IMR-90 (cell line): ENCODE measurements at regions of chr13 and their contacts with region 1.

Region 1: GRCh38 chr13:21476893-21477472 is 17.9 kb upstream of the ZDHHC20 start:
- DNase-seq: peak; percentile 74
- ATAC-seq: peak; percentile 85
- H3K4me3 ChIP-seq: peak overlapping the region; percentile 27
- H3K27ac ChIP-seq: no peak overlapping the region
- H3K4me1 ChIP-seq: no peaks in the 10 kb centered on the region
- H3K27me3 ChIP-seq: no peaks in the 10 kb centered on the region
- CTCF ChIP-seq: peak; percentile 83
- POLR2A ChIP-seq: no peak
- RAD21 ChIP-seq: peak; percentile 75

Region 2: DNA sequence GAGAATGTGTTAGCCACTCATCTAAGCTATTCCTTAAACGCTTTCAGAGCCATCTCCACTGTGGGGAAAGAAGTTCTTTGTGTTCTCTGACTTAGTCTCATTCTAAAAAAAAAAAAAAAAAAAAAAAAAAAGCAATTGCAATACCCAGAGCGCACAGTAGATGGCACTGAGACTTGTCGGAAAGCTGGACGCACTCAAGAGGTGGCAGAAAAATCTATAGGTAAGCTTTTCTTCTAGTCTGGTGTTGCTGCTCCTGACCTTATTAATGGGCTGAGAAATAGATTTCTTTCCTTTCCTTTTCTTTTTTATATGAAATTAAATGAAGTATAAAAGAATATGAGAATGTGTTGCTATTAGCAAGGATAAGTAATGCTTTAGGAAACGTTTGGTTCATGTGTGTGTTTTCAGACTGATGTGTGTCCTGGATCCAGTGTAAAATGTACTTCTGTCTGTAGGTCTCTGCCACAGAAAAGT is 1279.6 kb before region 1 on chr13:
- CTCF ChIA-PET with region 1: no interaction called
- POLR2A ChIA-PET with region 1: no interaction called
- dilution Hi-C with region 1: no loop called
- in situ Hi-C with region 1: loop called (anchors 25 kb)
- intact Hi-C with region 1: loop called (anchors 2 kb)
- DNase-seq: peak; percentile 56
- ATAC-seq: peak; percentile 73
- H3K4me3 ChIP-seq: no peak overlapping the region
- H3K27ac ChIP-seq: no peak overlapping the region
- H3K4me1 ChIP-seq: peaks cover 2% of the 10 kb centered on the region; the same call in 1 of the 2 replicates
- H3K27me3 ChIP-seq: peaks cover 65% of the 10 kb centered on the region
- CTCF ChIP-seq: peak; percentile 80
- POLR2A ChIP-seq: no peak
- RAD21 ChIP-seq: peak; percentile 76

Region 3: DNA sequence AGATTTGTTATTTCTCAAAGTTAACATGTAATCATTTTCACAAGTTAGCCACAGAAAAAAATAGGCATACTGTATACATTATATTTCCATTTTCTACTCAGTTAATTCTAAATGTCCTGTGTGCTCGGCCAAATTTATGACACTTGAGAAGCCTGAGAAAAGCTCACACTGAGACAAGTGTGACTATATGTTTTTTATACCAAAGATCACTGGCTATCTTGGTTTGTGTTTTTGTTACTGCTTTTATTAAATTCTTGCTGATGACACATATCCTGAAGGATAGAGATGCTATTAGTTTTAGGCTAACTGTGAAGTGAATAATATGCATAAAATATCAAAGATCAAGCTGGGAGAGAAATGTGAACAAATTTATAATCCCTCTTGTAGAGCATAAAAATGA is 822.8 kb before region 1 on chr13:
- CTCF ChIA-PET with region 1: no interaction called
- POLR2A ChIA-PET with region 1: no interaction called
- dilution Hi-C with region 1: no loop called
- in situ Hi-C with region 1: no loop called
- intact Hi-C with region 1: no loop called
- DNase-seq: peak; percentile 53
- ATAC-seq: peak; percentile 62
- H3K4me3 ChIP-seq: no peak overlapping the region
- H3K27ac ChIP-seq: no peak overlapping the region
- H3K4me1 ChIP-seq: no peaks in the 10 kb centered on the region
- H3K27me3 ChIP-seq: no peaks in the 10 kb centered on the region
- CTCF ChIP-seq: no peak
- POLR2A ChIP-seq: no peak
- RAD21 ChIP-seq: no peak

Region 4: GRCh38 chr13:20713751-20714150 is 763.2 kb before region 1 on chr13:
- CTCF ChIA-PET with region 1: no interaction called
- POLR2A ChIA-PET with region 1: no interaction called
- dilution Hi-C with region 1: no loop called
- in situ Hi-C with region 1: no loop called
- intact Hi-C with region 1: loop called (anchors 5 kb)
- DNase-seq: peak; percentile 39
- ATAC-seq: no peak
- H3K4me3 ChIP-seq: no peak overlapping the region
- H3K27ac ChIP-seq: no peak overlapping the region
- H3K4me1 ChIP-seq: peaks cover 9% of the 10 kb centered on the region
- H3K27me3 ChIP-seq: peaks cover 1% of the 10 kb centered on the region; the same call in 1 of the 2 replicates
- CTCF ChIP-seq: no peak
- POLR2A ChIP-seq: no peak
- RAD21 ChIP-seq: no peak

Region 5: DNA sequence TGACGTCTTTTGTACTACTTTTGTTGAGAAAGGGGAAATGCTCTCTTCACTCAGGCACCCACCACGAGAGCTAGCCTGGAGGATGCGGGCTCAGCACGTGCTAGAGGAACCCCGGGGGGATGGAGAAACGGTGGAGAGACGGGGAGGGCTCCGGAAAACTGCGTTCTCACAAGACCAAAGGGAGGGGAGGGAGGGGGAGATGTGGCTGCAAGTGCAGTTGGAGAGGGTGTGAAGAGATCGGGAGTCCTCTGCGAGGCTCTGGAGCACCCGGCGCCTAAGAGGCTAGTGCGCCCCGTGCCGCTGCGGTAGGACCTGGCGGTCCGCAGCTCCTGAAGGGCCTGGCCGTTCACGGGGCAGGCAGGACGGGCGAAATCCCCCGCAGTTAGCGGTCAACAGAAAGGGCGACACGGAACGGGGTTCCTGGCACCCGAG is 531.0 kb before region 1 on chr13:
- CTCF ChIA-PET with region 1: no interaction called
- POLR2A ChIA-PET with region 1: no interaction called
- dilution Hi-C with region 1: no loop called
- in situ Hi-C with region 1: loop called (anchors 10 kb)
- intact Hi-C with region 1: loop called (anchors 2 kb)
- DNase-seq: no peak
- ATAC-seq: no peak
- H3K4me3 ChIP-seq: no peak overlapping the region
- H3K27ac ChIP-seq: no peak overlapping the region
- H3K4me1 ChIP-seq: peaks cover 3% of the 10 kb centered on the region; the same call in 1 of the 2 replicates
- H3K27me3 ChIP-seq: no peaks in the 10 kb centered on the region; the same call in 1 of the 2 replicates
- CTCF ChIP-seq: no peak
- POLR2A ChIP-seq: no peak
- RAD21 ChIP-seq: no peak

Region 6: GRCh38 chr13:21181671-21182070 is 295.3 kb before region 1 on chr13:
- CTCF ChIA-PET with region 1: interaction called, 3 read pairs
- POLR2A ChIA-PET with region 1: no interaction called
- dilution Hi-C with region 1: no loop called
- in situ Hi-C with region 1: loop called (anchors 10 kb)
- intact Hi-C with region 1: loop called (anchors 2 kb)
- DNase-seq: no peak
- ATAC-seq: no peak
- H3K4me3 ChIP-seq: no peak overlapping the region
- H3K27ac ChIP-seq: no peak overlapping the region
- H3K4me1 ChIP-seq: 0 out of 2 replicates have a peak, but pooled peaks cover 2% of the 10 kb centered on the region
- H3K27me3 ChIP-seq: no peaks in the 10 kb centered on the region
- CTCF ChIP-seq: no peak
- POLR2A ChIP-seq: no peak
- RAD21 ChIP-seq: no peak

Region 7: GRCh38 chr13:21638319-21639282 is 161.6 kb after region 1 on chr13:
- CTCF ChIA-PET with region 1: no interaction called
- POLR2A ChIA-PET with region 1: no interaction called
- dilution Hi-C with region 1: no loop called
- in situ Hi-C with region 1: no loop called
- intact Hi-C with region 1: no loop called
- DNase-seq: peak; percentile 4
- ATAC-seq: peak; percentile 53
- H3K4me3 ChIP-seq: no peak overlapping the region
- H3K27ac ChIP-seq: no peak overlapping the region; the same call in 1 of the 2 replicates
- H3K4me1 ChIP-seq: peaks cover 3% of the 10 kb centered on the region; the same call in 1 of the 2 replicates
- H3K27me3 ChIP-seq: peaks cover 2% of the 10 kb centered on the region
- CTCF ChIP-seq: peak; percentile 69
- POLR2A ChIP-seq: no peak
- RAD21 ChIP-seq: peak; percentile 72